Mucosa of descending colon (tissue), 3 donors: ENCODE measurements at regions of chr17 and their contacts with region 1.

Region 1: DNA sequence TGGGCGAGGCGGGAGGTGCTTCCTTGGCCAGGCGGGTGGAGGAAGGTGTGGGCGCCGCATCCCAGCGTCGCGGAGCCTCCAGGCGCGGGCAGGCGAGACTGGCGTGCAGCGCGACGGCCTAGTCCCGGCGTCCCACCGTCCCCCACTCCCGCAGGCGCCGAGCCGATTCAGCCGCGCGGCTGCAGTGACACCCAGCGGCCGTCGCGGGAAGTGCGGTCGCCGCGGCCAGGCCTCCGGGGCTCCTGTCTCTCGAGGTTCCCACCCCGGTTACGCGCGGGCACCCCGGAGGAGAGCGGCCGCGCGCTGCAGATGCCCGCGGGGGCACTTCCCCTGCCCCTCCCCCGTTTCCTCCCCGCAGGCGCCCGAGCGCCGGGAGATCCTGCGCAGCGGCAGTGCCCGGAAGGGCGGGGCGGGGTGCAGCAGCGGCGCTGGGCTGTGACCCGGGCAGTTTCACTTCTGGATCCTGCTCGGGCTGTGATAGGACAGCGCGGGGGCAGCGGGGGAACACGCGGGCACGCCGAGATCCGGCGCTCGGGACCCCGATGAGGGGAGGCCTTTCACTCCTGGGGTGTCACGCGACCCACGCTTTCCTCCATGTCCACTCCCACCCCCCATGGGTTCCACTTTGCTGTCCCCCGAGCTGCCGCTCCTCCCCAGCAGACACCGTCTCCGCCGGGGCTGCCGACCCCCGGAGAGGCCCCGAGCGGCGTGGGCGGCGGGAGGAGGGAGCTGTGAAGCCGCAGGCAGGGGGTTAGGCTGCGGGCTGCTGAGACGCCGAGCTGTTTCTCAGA is 16.6 kb downstream of the GRB7 start:
- DNase-seq: peak; percentile 95 to 98 (median 98)
- ATAC-seq: peak; percentile 89
- H3K4me3 ChIP-seq: peak overlapping the region; percentile 42
- H3K4me1 ChIP-seq: peaks cover 15% of the 10 kb centered on the region
- CTCF ChIP-seq: peak; percentile 98

Region 2: GRCh38 chr17:39621523-39622379 is 132.6 kb before region 1 on chr17:
- intact Hi-C with region 1: loop called in 1 of 2 experiments (anchors 10 kb)
- DNase-seq: peak; percentile 88 to 94 (median 92)
- ATAC-seq: peak; percentile 76
- H3K4me3 ChIP-seq: no peak overlapping the region
- H3K4me1 ChIP-seq: peaks cover 41% of the 10 kb centered on the region
- CTCF ChIP-seq: peak; percentile 98